ENCODE measurements at regions of chr9 and their contacts with region 1.

Region 1: DNA sequence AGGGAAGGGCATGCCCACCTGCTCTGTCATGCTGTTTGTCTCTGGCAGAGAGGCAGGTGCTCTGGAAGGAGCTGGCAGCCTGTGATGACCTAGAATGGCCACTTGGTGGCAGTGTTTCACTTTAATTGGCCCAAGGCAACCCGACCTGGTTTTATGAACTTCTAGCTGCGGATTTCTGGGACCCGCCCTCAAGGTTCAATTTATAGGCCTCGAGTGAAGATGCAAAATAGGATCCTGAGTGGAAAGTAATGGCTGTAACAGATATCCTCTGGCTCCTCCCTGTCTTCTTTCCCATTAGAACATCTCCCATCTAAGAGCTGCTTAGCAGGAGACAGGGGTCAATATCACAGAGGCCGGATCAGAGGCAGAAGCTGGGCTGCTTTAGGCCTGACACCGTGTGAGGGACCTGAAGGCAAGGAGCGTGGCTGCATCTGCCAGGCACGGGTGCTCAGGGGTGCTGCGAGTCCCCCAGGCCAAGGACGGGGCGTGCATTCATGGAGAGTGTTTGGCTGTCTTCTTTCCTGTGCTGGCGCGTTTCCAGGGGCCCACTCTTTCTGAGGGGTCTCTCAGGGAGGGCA is 56.7 kb upstream of the SLC28A3 start:
- DNase-seq: peak; percentile 8
- ATAC-seq: peak; percentile 96
- H3K4me3 ChIP-seq: no peak overlapping the region
- H3K27ac ChIP-seq: no peak overlapping the region
- H3K4me1 ChIP-seq: no peaks in the 10 kb centered on the region
- H3K27me3 ChIP-seq: peaks cover 0 to 2% of the 10 kb centered on the region in 2 experiments; a peak in 1 of 4 replicates
- CTCF ChIP-seq: peak; percentile 77 to 91 (median 80)
- EP300 ChIP-seq: no peak
- POLR2A ChIP-seq: no peak
- RAD21 ChIP-seq: peak; percentile 87

Region 2: GRCh38 chr9:84511651-84512050 is 114.4 kb after region 1 on chr9:
- CTCF ChIA-PET with region 1: no interaction called
- POLR2A ChIA-PET with region 1: no interaction called
- RAD21 ChIA-PET with region 1: no interaction called
- SMC1A ChIA-PET with region 1: no interaction called
- in situ Hi-C with region 1: no loop called
- intact Hi-C with region 1: no loop called
- DNase-seq: no peak
- ATAC-seq: no peak
- H3K4me3 ChIP-seq: no peak overlapping the region
- H3K27ac ChIP-seq: no peak overlapping the region
- H3K4me1 ChIP-seq: no peaks in the 10 kb centered on the region
- H3K27me3 ChIP-seq: no peaks in the 10 kb centered on the region
- CTCF ChIP-seq: no peak
- EP300 ChIP-seq: no peak
- POLR2A ChIP-seq: no peak
- RAD21 ChIP-seq: no peak

Region 3: GRCh38 chr9:84668196-84669012 is 271.2 kb after region 1 on chr9:
- CTCF ChIA-PET with region 1: no interaction called
- POLR2A ChIA-PET with region 1: no interaction called
- RAD21 ChIA-PET with region 1: no interaction called
- SMC1A ChIA-PET with region 1: interaction called, 3 read pairs
- in situ Hi-C with region 1: loop called (anchors 10 kb)
- intact Hi-C with region 1: no loop called
- DNase-seq: no peak
- ATAC-seq: peak; percentile 95
- H3K4me3 ChIP-seq: peak overlapping the region; percentile 56
- H3K27ac ChIP-seq: no peak overlapping the region
- H3K4me1 ChIP-seq: peaks cover 4% of the 10 kb centered on the region; the same call in 1 of the 2 replicates
- H3K27me3 ChIP-seq: peaks cover 5 to 11% of the 10 kb centered on the region in 2 experiments; a peak in 3 of 4 replicates
- CTCF ChIP-seq: peak; percentile 59 to 65 (median 61); a peak in 5 of 6 replicates
- EP300 ChIP-seq: no peak
- POLR2A ChIP-seq: no peak
- RAD21 ChIP-seq: peak; percentile 45

Region 4: GRCh38 chr9:84953797-84954705 is 556.8 kb after region 1 on chr9:
- CTCF ChIA-PET with region 1: interaction called, 9 read pairs
- POLR2A ChIA-PET with region 1: no interaction called
- RAD21 ChIA-PET with region 1: interaction called, 4 read pairs
- SMC1A ChIA-PET with region 1: interaction called, 6 read pairs
- in situ Hi-C with region 1: loop called (anchors 5 kb)
- intact Hi-C with region 1: loop called (anchors 2 kb)
- DNase-seq: no peak
- ATAC-seq: peak; percentile 99
- H3K4me3 ChIP-seq: no peak overlapping the region
- H3K27ac ChIP-seq: no peak overlapping the region
- H3K4me1 ChIP-seq: no peaks in the 10 kb centered on the region
- H3K27me3 ChIP-seq: no peaks in the 10 kb centered on the region
- CTCF ChIP-seq: peak; percentile 93 to 95 (median 94)
- EP300 ChIP-seq: no peak
- POLR2A ChIP-seq: no peak
- RAD21 ChIP-seq: peak; percentile 83

Region 5: DNA sequence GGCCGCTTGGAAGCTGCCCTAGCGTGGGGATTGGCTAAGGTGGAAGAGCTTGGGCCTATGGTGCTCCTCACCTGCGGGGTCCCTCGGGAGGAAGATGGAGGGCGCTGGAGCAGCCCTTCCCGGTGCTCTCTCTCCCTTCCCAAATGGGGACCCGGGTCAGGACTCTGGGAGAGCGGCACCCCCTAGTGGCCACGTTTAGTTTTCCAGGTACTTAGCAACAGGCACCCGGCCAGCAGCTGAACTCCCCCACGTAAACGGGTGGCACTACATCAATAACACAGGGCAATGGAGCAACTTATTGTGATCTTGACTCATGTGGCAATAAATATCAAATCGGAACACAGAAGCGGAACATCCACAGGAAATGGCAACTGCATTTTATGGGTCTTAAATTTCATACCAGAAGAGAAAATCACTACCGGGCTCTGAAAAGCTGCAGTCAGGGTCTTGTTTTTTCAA is 1027.9 kb after region 1 on chr9:
- CTCF ChIA-PET with region 1: interaction called, 25 read pairs
- POLR2A ChIA-PET with region 1: no interaction called
- RAD21 ChIA-PET with region 1: interaction called, 7 read pairs
- SMC1A ChIA-PET with region 1: interaction called, 8 read pairs
- in situ Hi-C with region 1: loop called (anchors 10 kb)
- intact Hi-C with region 1: loop called (anchors 1 kb)
- DNase-seq: no peak
- ATAC-seq: peak; percentile 87
- H3K4me3 ChIP-seq: no peak overlapping the region
- H3K27ac ChIP-seq: no peak overlapping the region
- H3K4me1 ChIP-seq: no peaks in the 10 kb centered on the region
- H3K27me3 ChIP-seq: no peaks in the 10 kb centered on the region
- CTCF ChIP-seq: peak; percentile 61 to 68 (median 66)
- EP300 ChIP-seq: no peak
- POLR2A ChIP-seq: no peak
- RAD21 ChIP-seq: peak; percentile 69

Region 6: GRCh38 chr9:85599540-85600105 is 1202.4 kb after region 1 on chr9:
- CTCF ChIA-PET with region 1: no interaction called
- POLR2A ChIA-PET with region 1: no interaction called
- RAD21 ChIA-PET with region 1: no interaction called
- SMC1A ChIA-PET with region 1: no interaction called
- in situ Hi-C with region 1: no loop called
- intact Hi-C with region 1: no loop called
- DNase-seq: no peak
- ATAC-seq: no peak
- H3K4me3 ChIP-seq: no peak overlapping the region
- H3K27ac ChIP-seq: no peak overlapping the region
- H3K4me1 ChIP-seq: no peaks in the 10 kb centered on the region
- H3K27me3 ChIP-seq: no peaks in the 10 kb centered on the region
- CTCF ChIP-seq: no peak
- EP300 ChIP-seq: no peak
- POLR2A ChIP-seq: no peak
- RAD21 ChIP-seq: no peak